Left colon (tissue), 2 donors: ENCODE measurements at regions of chr12 and their contacts with region 1.

Region 1: DNA sequence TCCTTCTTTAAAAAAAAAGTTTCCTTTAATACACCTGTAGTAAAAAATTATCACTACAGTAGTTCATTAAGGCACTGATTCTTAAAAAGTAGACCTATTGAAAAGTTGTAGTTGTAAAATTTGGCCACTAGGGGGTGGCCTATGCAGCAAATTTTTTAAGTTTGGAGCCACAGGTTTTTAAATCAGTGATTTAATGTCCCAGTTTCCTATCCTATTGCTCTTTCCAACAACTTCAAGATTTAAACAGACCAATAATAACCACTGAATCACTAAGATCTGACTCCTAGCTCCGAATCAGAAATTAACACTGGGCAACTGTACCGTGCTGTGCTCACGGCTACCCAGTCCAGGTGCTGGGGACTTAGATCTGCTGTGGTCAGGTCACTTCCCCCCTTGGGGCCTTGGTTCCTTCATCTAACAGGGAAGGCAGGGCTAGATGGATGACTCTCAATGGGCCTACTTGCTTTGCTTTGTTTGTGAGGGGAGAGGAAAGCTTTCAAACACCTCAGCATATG is 279.3 kb downstream of the MED13L start:
- DNase-seq: peak in 1 of 2 donors; percentile 9
- ATAC-seq: peak; percentile 45

Region 2: GRCh38 chr12:115840159-115840558 is 158.0 kb before region 1 on chr12:
- intact Hi-C with region 1: no loop called
- DNase-seq: peak in 1 of 2 donors; percentile 7
- ATAC-seq: peak; percentile 49

Region 3: GRCh38 chr12:116703214-116703795 is 705.1 kb after region 1 on chr12:
- intact Hi-C with region 1: loop called in 1 of 2 experiments (anchors 10 kb)
- DNase-seq: peak; percentile 50 to 62
- ATAC-seq: peak; percentile 83